MCF 10A (cell line): ENCODE measurements at regions of chr2 and their contacts with region 1.

Region 1: DNA sequence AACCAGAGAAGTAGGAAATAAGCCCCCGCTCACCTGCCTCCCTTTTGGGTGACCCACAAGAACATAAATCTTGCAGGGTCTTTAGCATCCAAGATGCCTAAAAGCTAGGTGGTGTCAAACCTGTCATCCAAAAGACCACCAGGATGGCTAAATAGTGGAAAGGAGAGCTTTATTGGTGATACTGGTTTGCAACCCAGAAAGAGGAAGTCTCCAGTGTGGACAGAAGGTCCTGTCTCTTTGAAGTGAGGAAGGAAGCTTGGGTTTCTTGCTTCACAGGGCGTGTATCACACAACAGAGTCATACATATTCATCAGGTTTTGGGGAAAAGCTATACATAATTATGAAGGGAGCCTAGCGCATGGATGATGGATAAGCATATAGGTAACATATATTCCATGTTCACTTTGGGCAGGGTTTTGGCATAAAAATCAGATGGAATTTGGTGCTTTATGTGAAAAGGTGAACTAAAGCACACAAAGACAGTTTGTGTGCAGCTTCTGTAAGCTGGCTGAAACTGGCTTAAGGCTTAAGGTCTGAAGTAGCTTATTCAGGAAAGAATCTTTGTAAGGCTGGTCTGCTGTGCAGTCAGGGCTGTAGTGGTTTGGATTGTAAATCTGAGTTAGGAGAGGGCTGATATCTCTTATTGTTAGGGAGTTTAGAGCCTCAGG is 102.2 kb upstream of the MSH2 start:
- DNase-seq: no peak
- H3K4me3 Mint-ChIP-seq: no peak overlapping the region
- H3K27ac Mint-ChIP-seq: no peak overlapping the region
- H3K4me1 Mint-ChIP-seq: peaks cover 19% of the 10 kb centered on the region
- H3K27me3 Mint-ChIP-seq: no peaks in the 10 kb centered on the region
- CTCF ChIP-seq: no peak

Region 2: DNA sequence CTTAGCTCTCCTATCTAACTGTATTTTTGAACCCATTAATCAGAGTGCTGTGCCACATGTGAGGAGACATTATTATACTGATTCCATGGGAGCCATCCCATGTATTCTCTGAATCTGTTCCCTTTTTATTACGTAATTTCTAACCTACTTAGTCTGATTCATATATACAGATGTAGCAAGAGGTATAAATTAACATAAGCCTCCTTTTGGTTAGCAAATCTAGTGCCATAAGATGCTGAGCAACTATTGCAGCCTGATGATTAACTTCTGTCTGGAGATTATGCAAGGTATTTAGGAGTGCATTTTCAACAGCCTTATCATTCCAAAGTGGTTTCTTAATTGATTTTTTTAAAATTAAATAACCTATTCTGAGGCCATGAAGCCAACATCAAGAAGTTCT is 11.9 kb before region 1 on chr2:
- CTCF ChIA-PET with region 1: interaction called, 12 read pairs
- POLR2A ChIA-PET with region 1: interaction called, 5 read pairs
- intact Hi-C with region 1: no loop called
- DNase-seq: peak; percentile 85
- H3K4me3 Mint-ChIP-seq: no peak overlapping the region
- H3K27ac Mint-ChIP-seq: no peak overlapping the region
- H3K4me1 Mint-ChIP-seq: peaks cover 11% of the 10 kb centered on the region
- H3K27me3 Mint-ChIP-seq: no peaks in the 10 kb centered on the region
- CTCF ChIP-seq: no peak